ENCODE measurements at regions of chr1 and their contacts with region 1.

Region 1: GRCh38 chr1:212608209-212608955 is at the start of gene ATF3:
- DNase-seq: peak; percentile 97 to 99 (median 99)
- H3K4me3 ChIP-seq: peak within 1 kb of the TSS; percentile 62 to 94 (median 78)
- H3K27ac ChIP-seq: peak within 1 kb of the TSS; percentile 41 to 86
- H3K4me1 ChIP-seq: peaks cover 3 to 37% (median 34%) of the 10 kb centered on the region in 4 experiments
- H3K27me3 ChIP-seq: peaks cover 18 to 56% (median 38%) of the 10 kb centered on the region in 5 experiments

Region 2: DNA sequence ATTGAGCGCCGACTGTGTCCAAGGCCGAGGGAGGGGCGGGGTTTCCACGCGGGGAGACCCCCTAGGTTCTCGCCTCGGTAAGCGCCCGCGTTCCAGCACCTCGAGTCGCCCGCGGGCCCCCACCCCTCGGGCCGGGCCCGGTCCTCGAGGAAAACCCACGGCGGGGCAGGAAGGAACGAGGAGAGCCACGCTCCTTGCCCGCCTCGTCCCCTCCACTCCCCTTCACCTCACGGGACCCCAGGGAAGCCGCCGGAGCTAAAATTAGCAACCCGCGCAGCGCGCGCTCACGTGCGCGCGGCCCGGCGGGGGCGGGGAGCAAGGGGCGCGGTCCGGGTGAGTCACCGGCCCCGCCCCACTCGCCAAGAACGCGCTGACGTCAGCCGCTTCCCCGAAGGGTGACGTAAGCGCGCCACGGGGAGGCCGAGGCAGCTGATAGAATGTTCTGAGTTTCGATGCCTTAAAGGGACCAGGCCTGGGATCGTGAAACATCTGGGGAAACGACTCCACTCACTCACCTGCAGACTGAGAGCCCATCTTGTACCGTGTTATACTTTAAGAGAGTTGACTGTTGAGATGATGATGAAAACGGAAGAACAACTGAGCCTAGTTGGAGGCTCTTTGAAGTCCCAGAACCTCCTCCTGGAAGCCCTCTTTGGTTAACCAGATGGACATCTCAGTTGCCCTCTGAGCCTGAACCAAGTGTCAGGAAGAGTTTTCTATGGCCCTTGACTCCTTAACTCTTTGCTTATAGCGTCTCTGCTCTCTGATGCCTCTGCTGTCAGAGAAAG is 49.5 kb before region 1 on chr1:
- CTCF ChIA-PET with region 1: no interaction called
- POLR2A ChIA-PET with region 1: interaction called, 11 read pairs
- DNase-seq: peak; percentile 91 to 96 (median 95)
- H3K4me3 ChIP-seq: peak overlapping the region; percentile 42 to 81 (median 71)
- H3K27ac ChIP-seq: peak overlapping the region in 1 of 2 experiments; percentile 63
- H3K4me1 ChIP-seq: peaks cover 0 to 14% (median 8%) of the 10 kb centered on the region in 4 experiments
- H3K27me3 ChIP-seq: no peaks in the 10 kb centered on the region

Region 3: GRCh38 chr1:212595787-212596714 is 12.3 kb before region 1 on chr1:
- CTCF ChIA-PET with region 1: interaction called, 12 read pairs
- POLR2A ChIA-PET with region 1: interaction called, 5 read pairs
- DNase-seq: peak; percentile 72 to 95 (median 94)
- H3K4me3 ChIP-seq: peak overlapping the region in 4 of 7 experiments; percentile 33 to 51 (median 45)
- H3K27ac ChIP-seq: peak overlapping the region; percentile 12 to 44
- H3K4me1 ChIP-seq: peaks cover 4 to 16% (median 7%) of the 10 kb centered on the region in 4 experiments
- H3K27me3 ChIP-seq: peaks cover 0 to 7% (median 0%) of the 10 kb centered on the region in 5 experiments

Region 4: DNA sequence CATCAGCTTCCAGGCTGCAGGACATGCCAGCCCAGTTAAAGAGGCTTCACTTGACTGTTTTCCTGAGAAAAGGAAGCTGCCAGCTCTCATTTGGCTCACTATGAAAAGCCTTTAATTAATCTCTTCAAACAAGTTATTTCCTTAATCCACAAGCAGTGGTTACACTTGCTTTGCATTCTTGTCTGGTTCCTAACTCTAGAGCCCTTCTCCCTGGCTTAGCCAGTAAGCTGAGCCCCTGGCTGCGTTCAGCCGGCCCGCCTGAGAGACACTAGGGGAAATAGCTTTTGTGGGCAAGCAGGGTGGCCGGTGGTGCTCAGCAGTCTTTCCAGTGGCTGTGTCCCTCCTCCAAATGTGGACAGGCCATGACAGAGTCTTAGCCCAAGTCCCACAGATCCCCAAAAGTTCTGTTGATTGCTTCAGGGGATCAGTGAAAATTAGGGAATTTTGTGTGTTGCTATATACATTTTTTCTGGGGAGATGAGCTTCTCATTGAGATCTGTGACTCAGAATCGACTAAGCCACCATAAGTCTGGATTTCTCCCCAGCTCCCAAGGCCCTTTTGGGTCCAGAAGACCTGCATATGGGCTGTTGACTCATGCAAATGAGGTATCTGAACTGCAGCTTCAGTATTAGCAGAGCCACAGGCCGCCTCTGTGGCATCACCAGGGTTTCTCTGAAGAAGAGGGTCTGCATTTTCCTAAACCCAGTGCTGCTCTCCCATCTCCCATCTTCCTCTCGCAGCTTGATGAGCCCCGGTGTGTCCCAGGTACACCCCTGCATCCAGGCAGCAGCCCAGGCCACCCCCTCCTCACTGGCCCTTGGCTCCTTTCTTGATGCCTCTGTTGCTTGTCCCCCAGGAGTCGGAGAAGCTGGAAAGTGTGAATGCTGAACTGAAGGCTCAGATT is 10.4 kb after region 1 on chr1:
- CTCF ChIA-PET with region 1: interaction called, 7 read pairs
- POLR2A ChIA-PET with region 1: interaction called, 18 read pairs
- DNase-seq: no peak
- H3K4me3 ChIP-seq: no peak overlapping the region
- H3K27ac ChIP-seq: no peak overlapping the region
- H3K4me1 ChIP-seq: peaks cover 0 to 27% (median 19%) of the 10 kb centered on the region in 4 experiments
- H3K27me3 ChIP-seq: no peaks in the 10 kb centered on the region

Region 5: GRCh38 chr1:212688341-212689047 is 80.1 kb after region 1 on chr1:
- CTCF ChIA-PET with region 1: no interaction called
- POLR2A ChIA-PET with region 1: no interaction called
- DNase-seq: no peak
- H3K4me3 ChIP-seq: no peak overlapping the region
- H3K27ac ChIP-seq: no peak overlapping the region
- H3K4me1 ChIP-seq: peaks cover 0 to 11% (median 1%) of the 10 kb centered on the region in 4 experiments
- H3K27me3 ChIP-seq: peaks cover 0 to 2% (median 0%) of the 10 kb centered on the region in 5 experiments